Endothelial cell of umbilical vein (primary cell): ENCODE measurements at regions of chr19 and their contacts with region 1.

Region 1: DNA sequence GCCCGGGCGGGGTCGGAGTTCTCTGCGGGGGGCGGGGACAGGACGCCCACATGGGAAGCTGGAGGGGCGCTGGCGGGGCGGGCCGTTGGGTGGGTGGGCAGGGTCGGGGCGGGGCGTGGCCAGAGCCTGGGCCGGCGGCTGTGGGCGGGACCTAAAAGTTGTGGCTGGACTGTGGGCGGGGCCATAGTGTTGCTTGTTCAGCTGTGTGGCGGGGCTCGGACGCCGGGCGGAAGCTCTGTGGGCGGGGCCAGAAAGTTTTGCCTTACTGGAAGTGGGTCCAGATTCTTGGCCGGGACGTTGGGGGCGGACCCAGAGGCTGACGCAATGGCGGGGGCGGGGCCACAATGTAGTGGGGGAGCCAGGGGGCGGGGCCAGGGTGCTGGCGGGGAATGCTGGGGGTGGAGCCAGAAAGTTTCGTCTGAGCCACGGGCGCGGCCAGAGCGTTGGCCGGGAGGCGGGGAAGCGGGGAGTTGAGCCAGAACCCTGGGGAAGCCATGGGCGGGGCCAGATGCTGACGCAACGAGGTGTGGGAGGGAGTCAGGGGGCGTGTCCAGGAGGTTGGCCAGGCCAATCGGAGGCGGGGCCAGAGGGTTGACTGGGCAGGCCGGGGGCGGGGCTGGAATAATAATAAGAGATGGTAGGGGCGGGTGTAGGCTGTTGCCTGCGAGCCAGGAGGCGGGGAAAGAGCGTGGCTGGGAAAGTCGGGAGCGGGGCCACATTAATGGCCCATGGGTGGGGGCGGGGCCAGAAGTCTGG is 541 bp downstream of the CCDC9 start:
- DNase-seq: peak; percentile 99
- H3K4me3 ChIP-seq: peak overlapping the region in 2 of 3 experiments; percentile 34 to 73
- H3K27ac ChIP-seq: peak overlapping the region; percentile 96
- H3K4me1 ChIP-seq: peaks cover 11% of the 10 kb centered on the region
- H3K27me3 ChIP-seq: no peaks in the 10 kb centered on the region
- CTCF ChIP-seq: no peak
- POLR2A ChIP-seq: no peak

Region 2: DNA sequence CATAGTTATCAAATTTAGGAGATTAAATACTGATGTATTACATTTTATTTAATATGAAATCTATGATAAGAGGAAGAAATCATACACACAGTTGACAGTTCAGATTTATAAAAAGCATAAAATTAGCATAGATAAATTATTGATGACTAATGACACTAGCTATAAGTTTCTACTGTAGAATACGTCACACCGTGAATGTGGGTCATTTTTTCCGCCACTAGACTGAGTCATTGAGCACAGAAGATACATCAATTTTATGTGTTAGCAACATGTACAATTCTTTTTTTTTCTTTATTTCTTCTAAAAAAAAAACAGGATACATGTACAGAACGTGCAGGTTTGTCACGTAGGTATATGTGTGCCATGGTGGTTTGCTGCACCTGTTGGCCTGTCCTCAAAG is 428.4 kb before region 1 on chr19:
- CTCF ChIA-PET with region 1: no interaction called
- POLR2A ChIA-PET with region 1: no interaction called
- dilution Hi-C with region 1: no loop called
- intact Hi-C with region 1: no loop called
- DNase-seq: peak; percentile 30
- H3K4me3 ChIP-seq: no peak overlapping the region
- H3K27ac ChIP-seq: no peak overlapping the region
- H3K4me1 ChIP-seq: peaks cover 3% of the 10 kb centered on the region
- H3K27me3 ChIP-seq: no peaks in the 10 kb centered on the region
- CTCF ChIP-seq: no peak
- POLR2A ChIP-seq: no peak

Region 3: GRCh38 chr19:47273313-47273977 is 16.6 kb after region 1 on chr19:
- CTCF ChIA-PET with region 1: interaction called, 6 read pairs
- POLR2A ChIA-PET with region 1: interaction called, 17 read pairs
- dilution Hi-C with region 1: no loop called
- intact Hi-C with region 1: loop called (anchors 1 kb)
- DNase-seq: peak; percentile 91
- H3K4me3 ChIP-seq: peak overlapping the region; percentile 16 to 67 (median 64)
- H3K27ac ChIP-seq: peak overlapping the region; percentile 92
- H3K4me1 ChIP-seq: peaks cover 13% of the 10 kb centered on the region
- H3K27me3 ChIP-seq: no peaks in the 10 kb centered on the region
- CTCF ChIP-seq: no peak
- POLR2A ChIP-seq: peak; percentile 75